ENCODE measurements at regions of chr6 and their contacts with region 1.

Region 1: DNA sequence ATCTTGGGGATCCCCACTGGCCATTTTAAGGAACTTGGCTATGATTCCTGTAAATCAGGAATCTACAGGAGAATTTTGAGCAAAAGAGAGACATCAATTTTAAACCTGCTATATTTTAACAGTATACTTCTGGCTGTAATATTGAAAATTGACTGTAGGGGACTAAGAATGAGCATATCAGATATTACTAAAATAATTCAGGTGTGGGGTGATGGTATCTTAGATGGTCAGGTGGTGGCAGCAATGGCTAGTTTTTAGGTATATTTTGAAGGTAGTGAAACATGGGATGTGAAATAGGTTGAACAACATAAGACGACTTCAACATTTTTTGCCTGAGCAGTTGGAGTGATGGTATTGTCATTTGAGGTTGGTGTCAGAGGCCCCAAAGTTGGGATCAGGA is 32.1 kb downstream of the FAM83B start:
- DNase-seq: peak; percentile 69
- ATAC-seq: peak; percentile 48
- H3K4me3 ChIP-seq: no peak overlapping the region
- H3K27ac ChIP-seq: no peak overlapping the region
- H3K4me1 ChIP-seq: peaks cover 33% of the 10 kb centered on the region
- H3K27me3 ChIP-seq: no peaks in the 10 kb centered on the region
- CTCF ChIP-seq: peak; percentile 80

Region 2: GRCh38 chr6:54695815-54696214 is 182.9 kb before region 1 on chr6:
- CTCF ChIA-PET with region 1: no interaction called
- POLR2A ChIA-PET with region 1: no interaction called
- intact Hi-C with region 1: no loop called
- DNase-seq: no peak
- ATAC-seq: no peak
- H3K4me3 ChIP-seq: no peak overlapping the region
- H3K27ac ChIP-seq: no peak overlapping the region
- H3K4me1 ChIP-seq: peaks cover 42% of the 10 kb centered on the region
- H3K27me3 ChIP-seq: no peaks in the 10 kb centered on the region
- CTCF ChIP-seq: no peak

Region 3: GRCh38 chr6:54717849-54718455 is 160.7 kb before region 1 on chr6:
- CTCF ChIA-PET with region 1: no interaction called
- POLR2A ChIA-PET with region 1: no interaction called
- intact Hi-C with region 1: loop called (anchors 10 kb)
- DNase-seq: peak; percentile 94
- ATAC-seq: peak; percentile 87
- H3K4me3 ChIP-seq: no peak overlapping the region
- H3K27ac ChIP-seq: no peak overlapping the region
- H3K4me1 ChIP-seq: peaks cover 12% of the 10 kb centered on the region
- H3K27me3 ChIP-seq: no peaks in the 10 kb centered on the region
- CTCF ChIP-seq: peak; percentile 87

Region 4: GRCh38 chr6:54916862-54917261 is 38.2 kb after region 1 on chr6:
- CTCF ChIA-PET with region 1: no interaction called
- POLR2A ChIA-PET with region 1: no interaction called
- intact Hi-C with region 1: loop called (anchors 5 kb)
- DNase-seq: peak; percentile 98
- ATAC-seq: peak; percentile 100
- H3K4me3 ChIP-seq: peak overlapping the region; percentile 22; the same call in 1 of the 2 replicates
- H3K27ac ChIP-seq: peak overlapping the region; percentile 50
- H3K4me1 ChIP-seq: peaks cover 16% of the 10 kb centered on the region
- H3K27me3 ChIP-seq: no peaks in the 10 kb centered on the region
- CTCF ChIP-seq: no peak

Region 5: GRCh38 chr6:54935739-54936138 is 57.1 kb after region 1 on chr6:
- CTCF ChIA-PET with region 1: no interaction called
- POLR2A ChIA-PET with region 1: no interaction called
- intact Hi-C with region 1: no loop called
- DNase-seq: peak; percentile 95
- ATAC-seq: peak; percentile 99
- H3K4me3 ChIP-seq: no peak overlapping the region
- H3K27ac ChIP-seq: peak overlapping the region; percentile 85
- H3K4me1 ChIP-seq: peaks cover 18% of the 10 kb centered on the region
- H3K27me3 ChIP-seq: no peaks in the 10 kb centered on the region
- CTCF ChIP-seq: no peak

Region 6: GRCh38 chr6:55239099-55239498 is 360.4 kb after region 1 on chr6:
- CTCF ChIA-PET with region 1: no interaction called
- POLR2A ChIA-PET with region 1: no interaction called
- intact Hi-C with region 1: loop called (anchors 5 kb)
- DNase-seq: peak; percentile 16
- ATAC-seq: no peak
- H3K4me3 ChIP-seq: no peak overlapping the region
- H3K27ac ChIP-seq: no peak overlapping the region
- H3K4me1 ChIP-seq: no peaks in the 10 kb centered on the region
- H3K27me3 ChIP-seq: no peaks in the 10 kb centered on the region
- CTCF ChIP-seq: no peak

Measured in PC-3 (cell line).